ENCODE measurements at regions of chr10 and their contacts with region 1.

Region 1: DNA sequence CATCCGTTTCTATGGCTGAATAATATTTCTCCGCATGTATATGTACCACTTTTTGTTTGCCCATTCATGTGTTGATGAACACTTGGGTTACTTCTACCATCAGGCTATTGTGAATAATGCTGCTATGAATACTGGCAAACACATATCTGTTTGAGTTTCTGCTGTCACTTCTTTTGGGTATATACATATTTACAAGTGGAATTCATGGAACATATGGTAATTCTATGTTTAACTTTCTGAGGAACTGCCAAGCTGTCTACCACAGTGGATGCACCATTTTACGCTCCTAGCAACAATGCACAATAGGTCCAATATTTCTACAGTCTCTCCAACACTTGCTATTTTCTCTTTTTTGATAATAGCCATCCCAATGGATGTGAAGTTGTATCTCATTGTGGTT is 5.5 kb upstream of the ZNF488 start:
- DNase-seq: no peak
- ATAC-seq: no peak
- H3K4me3 Mint-ChIP-seq: no peak overlapping the region
- H3K27ac Mint-ChIP-seq: no peak overlapping the region
- H3K4me1 Mint-ChIP-seq: peaks cover 4% of the 10 kb centered on the region
- H3K27me3 Mint-ChIP-seq: peaks cover 30% of the 10 kb centered on the region
- CTCF ChIP-seq: no peak

Region 2: GRCh38 chr10:47351899-47352815 is 37.5 kb before region 1 on chr10:
- CTCF ChIA-PET with region 1: no interaction called
- POLR2A ChIA-PET with region 1: no interaction called
- intact Hi-C with region 1: loop called (anchors 2 kb)
- DNase-seq: no peak
- ATAC-seq: no peak
- H3K4me3 Mint-ChIP-seq: no peak overlapping the region
- H3K27ac Mint-ChIP-seq: no peak overlapping the region
- H3K4me1 Mint-ChIP-seq: no peaks in the 10 kb centered on the region
- H3K27me3 Mint-ChIP-seq: no peaks in the 10 kb centered on the region
- CTCF ChIP-seq: no peak

Measured in activated CD8-positive, alpha-beta T cell treated with anti-CD3 and anti-CD28 coated beads for 36 hours (primary cell).